Mammary epithelial cell (primary cell): ENCODE measurements at regions of chr20 and their contacts with region 1.

Region 1: GRCh38 chr20:33499355-33499754 is 9.5 kb downstream of the CBFA2T2 start:
- DNase-seq: no peak
- H3K4me3 ChIP-seq: no peak overlapping the region
- H3K27ac ChIP-seq: no peak overlapping the region
- H3K4me1 ChIP-seq: no peaks in the 10 kb centered on the region
- H3K27me3 ChIP-seq: no peaks in the 10 kb centered on the region
- CTCF ChIP-seq: no peak

Region 2: DNA sequence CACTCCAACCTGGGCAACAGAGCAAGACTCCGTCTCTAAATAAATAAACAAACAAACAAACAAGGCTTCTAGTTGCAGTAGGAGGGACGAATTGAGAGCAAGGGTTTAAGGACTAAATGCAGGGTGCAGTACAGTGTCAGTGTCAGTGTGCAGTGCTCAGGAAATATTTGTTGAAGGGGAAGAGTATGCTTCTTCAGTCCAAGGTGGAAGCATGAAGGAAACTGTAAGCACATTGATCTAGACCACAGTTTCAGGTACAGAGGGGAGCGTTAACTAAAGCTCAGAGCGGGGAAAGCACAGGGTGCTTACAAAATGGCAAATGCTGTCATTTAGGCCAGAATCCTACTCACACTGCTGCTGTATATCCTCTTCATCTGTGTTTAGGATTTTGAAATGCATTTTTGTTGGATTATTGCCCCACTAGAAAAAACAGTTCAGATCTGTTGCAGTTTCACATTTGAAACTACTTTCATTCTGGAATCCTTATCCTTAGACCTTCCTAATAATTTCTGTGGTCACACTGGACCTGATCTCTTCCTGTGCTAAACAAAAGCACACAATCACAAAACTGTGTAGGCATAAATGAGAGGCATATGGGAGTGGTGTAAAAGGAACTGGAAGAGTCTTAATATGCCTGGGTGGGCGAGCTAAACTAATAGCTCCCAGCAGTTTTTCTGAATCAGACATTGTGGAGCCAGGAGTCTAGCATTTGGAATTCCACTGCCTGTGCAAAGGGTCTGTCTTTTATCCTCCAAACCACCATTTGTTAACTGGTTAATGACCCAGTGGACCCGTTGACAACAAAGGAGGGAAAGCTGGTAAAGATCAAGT is 31.9 kb after region 1 on chr20:
- CTCF ChIA-PET with region 1: no interaction called
- dilution Hi-C with region 1: loop called (anchors 5 kb)
- in situ Hi-C with region 1: no loop called
- intact Hi-C with region 1: no loop called
- DNase-seq: no peak
- H3K4me3 ChIP-seq: no peak overlapping the region
- H3K27ac ChIP-seq: no peak overlapping the region
- H3K4me1 ChIP-seq: no peaks in the 10 kb centered on the region
- H3K27me3 ChIP-seq: no peaks in the 10 kb centered on the region
- CTCF ChIP-seq: no peak

Region 3: DNA sequence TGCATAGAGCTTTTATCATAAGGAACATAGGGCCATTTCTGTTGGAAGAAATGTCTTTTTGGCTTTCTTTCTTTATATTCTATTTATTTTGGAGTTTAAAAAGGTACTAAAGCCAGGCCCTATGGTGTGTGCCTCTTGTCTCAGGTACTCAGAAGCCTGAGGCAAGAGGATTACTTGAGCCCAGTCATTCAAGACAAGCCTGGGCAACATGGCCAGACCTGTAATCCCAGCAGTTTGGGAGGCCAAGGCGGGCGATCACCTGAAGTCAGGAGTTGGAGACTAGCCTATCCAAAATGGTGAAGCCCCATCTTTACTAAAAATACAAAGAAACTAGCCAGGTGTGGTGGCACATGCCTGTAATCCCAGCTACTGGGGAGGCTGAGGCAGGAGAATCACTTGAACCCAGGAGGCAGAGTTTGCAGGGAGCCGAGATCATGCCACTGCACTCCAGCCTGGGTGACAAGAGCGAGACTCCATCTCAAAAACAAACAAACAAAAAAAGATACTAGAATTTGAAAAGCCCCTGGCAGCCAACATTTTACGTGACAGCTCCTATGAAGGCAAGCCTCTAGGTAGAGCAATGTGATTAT is 70.5 kb after region 1 on chr20:
- CTCF ChIA-PET with region 1: no interaction called
- dilution Hi-C with region 1: loop called (anchors 5 kb)
- in situ Hi-C with region 1: no loop called
- intact Hi-C with region 1: no loop called
- DNase-seq: peak; percentile 80
- H3K4me3 ChIP-seq: no peak overlapping the region
- H3K27ac ChIP-seq: no peak overlapping the region
- H3K4me1 ChIP-seq: peaks cover 21% of the 10 kb centered on the region
- H3K27me3 ChIP-seq: no peaks in the 10 kb centered on the region
- CTCF ChIP-seq: no peak